HAP-1 (cell line): ENCODE measurements at regions of chr4 and their contacts with region 1.

Region 1: GRCh38 chr4:1260418-1261106 is 11.6 kb upstream of the CTBP1 start:
- DNase-seq: no peak
- H3K4me3 ChIP-seq: no peak overlapping the region
- H3K4me1 ChIP-seq: no peaks in the 10 kb centered on the region
- H3K27me3 ChIP-seq: no peaks in the 10 kb centered on the region

Region 2: GRCh38 chr4:1130316-1131186 is 130.0 kb before region 1 on chr4:
- in situ Hi-C with region 1: loop called (anchors 10 kb)
- DNase-seq: peak; percentile 48 to 72
- H3K4me3 ChIP-seq: no peak overlapping the region
- H3K4me1 ChIP-seq: no peaks in the 10 kb centered on the region
- H3K27me3 ChIP-seq: no peaks in the 10 kb centered on the region; the same call in none of the 2 replicates

Region 3: GRCh38 chr4:1503583-1504501 is 243.3 kb after region 1 on chr4:
- in situ Hi-C with region 1: no loop called
- DNase-seq: peak in 1 of 2 experiments; percentile 10
- H3K4me3 ChIP-seq: no peak overlapping the region
- H3K4me1 ChIP-seq: no peaks in the 10 kb centered on the region
- H3K27me3 ChIP-seq: no peaks in the 10 kb centered on the region